A549 (cell line): ENCODE measurements at regions of chr19 and their contacts with region 1.

Region 1: DNA sequence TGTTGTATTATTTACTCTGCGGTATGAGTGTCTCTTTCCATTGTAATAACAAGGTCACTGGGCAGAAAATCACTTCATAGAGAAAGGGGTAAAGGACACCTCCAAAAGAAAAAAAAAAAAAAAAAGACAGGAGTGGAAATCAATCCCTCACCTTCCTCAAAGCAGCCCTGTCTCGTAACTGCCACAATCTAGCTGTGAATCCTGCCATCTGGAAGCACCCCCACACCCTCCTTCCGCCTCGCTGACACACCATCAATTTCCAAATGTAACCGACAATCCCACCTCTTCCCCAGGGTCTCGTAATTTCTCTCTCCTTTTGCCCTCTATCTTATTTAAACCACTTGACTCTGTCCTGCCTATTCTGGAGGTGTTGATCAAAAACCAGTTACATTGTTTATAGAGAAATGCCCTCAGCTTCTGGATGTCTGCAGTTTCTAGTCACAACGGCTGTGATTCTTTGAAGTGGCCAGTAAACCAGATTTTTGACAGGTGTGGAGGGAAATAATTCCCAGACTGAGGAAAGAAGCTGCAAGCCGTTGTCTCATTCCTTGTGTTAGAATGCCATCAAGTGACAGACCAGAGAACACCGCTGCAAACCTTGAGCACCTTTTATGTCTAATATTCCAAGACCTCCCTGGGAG is 9.1 kb upstream of the POP4 start:
- DNase-seq: peak in 1 of 2 experiments; percentile 64
- ATAC-seq: peak; percentile 69 to 70; a peak in 5 of 6 replicates
- H3K4me3 ChIP-seq: no peak overlapping the region
- H3K27ac ChIP-seq: no peak overlapping the region
- H3K4me1 ChIP-seq: no peaks in the 10 kb centered on the region
- CTCF ChIP-seq: peak; percentile 76
- EP300 ChIP-seq: no peak
- POLR2A ChIP-seq: no peak
- RAD21 ChIP-seq: peak; percentile 81 to 83

Region 2: GRCh38 chr19:27966390-27966816 is 1630.6 kb before region 1 on chr19:
- CTCF ChIA-PET with region 1: interaction called, 13 read pairs
- POLR2A ChIA-PET with region 1: no interaction called
- DNase-seq: peak in 1 of 2 experiments; percentile 31
- ATAC-seq: no peak
- H3K4me3 ChIP-seq: no peak overlapping the region
- H3K27ac ChIP-seq: no peak overlapping the region
- H3K4me1 ChIP-seq: no peaks in the 10 kb centered on the region
- CTCF ChIP-seq: peak; percentile 73
- EP300 ChIP-seq: no peak
- POLR2A ChIP-seq: no peak
- RAD21 ChIP-seq: peak; percentile 58 to 62; a peak in 4 of 5 replicates

Region 3: GRCh38 chr19:29467824-29468401 is 129.1 kb before region 1 on chr19:
- CTCF ChIA-PET with region 1: interaction called, 10 read pairs
- POLR2A ChIA-PET with region 1: no interaction called
- DNase-seq: peak; percentile 36 to 77
- ATAC-seq: peak; percentile 81 to 91; a peak in 5 of 6 replicates
- H3K4me3 ChIP-seq: no peak overlapping the region
- H3K27ac ChIP-seq: no peak overlapping the region
- H3K4me1 ChIP-seq: no peaks in the 10 kb centered on the region
- CTCF ChIP-seq: peak; percentile 59
- EP300 ChIP-seq: no peak
- POLR2A ChIP-seq: no peak
- RAD21 ChIP-seq: peak; percentile 55 to 59